Activated B cell treated with CpG ODN at 0.5 μM for 24 hours (primary cell): ENCODE measurements at regions of chr22 and their contacts with region 1.

Region 1: GRCh38 chr22:29587938-29588699 is 7.2 kb upstream of the NIPSNAP1 start:
- DNase-seq: no peak
- ATAC-seq: no peak
- H3K4me3 Mint-ChIP-seq: no peak overlapping the region
- H3K27ac Mint-ChIP-seq: no peak overlapping the region
- H3K4me1 Mint-ChIP-seq: peaks cover 6% of the 10 kb centered on the region
- H3K27me3 Mint-ChIP-seq: no peaks in the 10 kb centered on the region
- CTCF ChIP-seq: no peak

Region 2: DNA sequence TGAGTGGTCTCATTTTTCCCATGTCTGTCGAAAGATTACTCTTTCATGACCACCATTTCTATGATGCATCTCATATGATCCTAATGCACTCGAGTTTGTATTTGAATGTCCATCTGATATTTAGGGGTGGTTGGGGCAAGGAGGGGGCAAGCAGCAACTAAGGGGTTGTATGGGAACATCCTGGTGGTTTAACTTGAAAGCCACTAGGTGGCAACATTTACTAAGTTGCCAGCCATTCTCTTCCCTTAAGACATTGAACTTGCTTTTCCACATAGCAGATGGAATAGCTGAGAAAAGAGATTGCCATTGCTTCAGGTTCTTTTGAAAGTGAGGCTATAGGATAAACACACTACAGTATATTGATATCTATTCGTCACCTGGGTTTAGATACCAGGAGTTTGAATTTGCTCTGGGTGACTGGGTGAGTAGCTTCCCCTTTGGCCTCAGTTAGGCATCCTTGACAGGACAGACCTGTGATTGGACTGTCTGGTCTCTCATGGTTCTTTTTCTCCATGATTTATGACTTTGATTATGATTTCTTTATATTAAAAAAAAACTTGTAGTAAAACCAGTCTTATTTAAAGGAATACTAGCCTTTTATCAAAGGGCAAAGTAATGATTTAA is 47.7 kb after region 1 on chr22:
- CTCF ChIA-PET with region 1: no interaction called
- POLR2A ChIA-PET with region 1: interaction called, 7 read pairs
- intact Hi-C with region 1: loop called (anchors 1 kb)
- DNase-seq: no peak
- ATAC-seq: no peak
- H3K4me3 Mint-ChIP-seq: no peak overlapping the region
- H3K27ac Mint-ChIP-seq: no peak overlapping the region
- H3K4me1 Mint-ChIP-seq: peaks cover 8% of the 10 kb centered on the region
- H3K27me3 Mint-ChIP-seq: no peaks in the 10 kb centered on the region
- CTCF ChIP-seq: no peak

Region 3: GRCh38 chr22:29773233-29773632 is 185.1 kb after region 1 on chr22:
- CTCF ChIA-PET with region 1: no interaction called
- POLR2A ChIA-PET with region 1: no interaction called
- intact Hi-C with region 1: no loop called
- DNase-seq: no peak
- ATAC-seq: no peak
- H3K4me3 Mint-ChIP-seq: no peak overlapping the region
- H3K27ac Mint-ChIP-seq: no peak overlapping the region
- H3K4me1 Mint-ChIP-seq: peaks cover 8% of the 10 kb centered on the region
- H3K27me3 Mint-ChIP-seq: no peaks in the 10 kb centered on the region
- CTCF ChIP-seq: no peak